GM12878 (cell line): ENCODE measurements at regions of chr7 and their contacts with region 1.

Region 1: GRCh38 chr7:42911454-42912447 is at the start of gene C7orf25:
- DNase-seq: peak; percentile 74
- ATAC-seq: peak; percentile 96
- H3K4me3 ChIP-seq: peak within 1 kb of the TSS; percentile 74
- H3K27ac ChIP-seq: peak within 1 kb of the TSS; percentile 72
- H3K4me1 ChIP-seq: peaks cover 15% of the 10 kb centered on the region
- H3K27me3 ChIP-seq: no peaks in the 10 kb centered on the region
- CTCF ChIP-seq: no peak
- EP300 ChIP-seq: no peak
- POLR2A ChIP-seq: peak; percentile 72
- RAD21 ChIP-seq: no peak
- polyA plus RNA-seq, gene C7orf25: 0.68 to 1.3 TPM

Region 2: GRCh38 chr7:42628074-42628473 is 283.7 kb before region 1 on chr7:
- CTCF ChIA-PET with region 1: no interaction called
- POLR2A ChIA-PET with region 1: no interaction called
- RAD21 ChIA-PET with region 1: no interaction called
- SMC1A ChIA-PET with region 1: no interaction called
- in situ Hi-C with region 1: no loop called
- intact Hi-C with region 1: no loop called
- DNase-seq: no peak
- ATAC-seq: no peak
- H3K4me3 ChIP-seq: no peak overlapping the region
- H3K27ac ChIP-seq: no peak overlapping the region
- H3K4me1 ChIP-seq: no peaks in the 10 kb centered on the region
- H3K27me3 ChIP-seq: no peaks in the 10 kb centered on the region
- CTCF ChIP-seq: no peak
- EP300 ChIP-seq: no peak
- POLR2A ChIP-seq: no peak
- RAD21 ChIP-seq: no peak

Region 3: GRCh38 chr7:42924223-42924838 is 12.6 kb after region 1 on chr7:
- CTCF ChIA-PET with region 1: interaction called, 9 read pairs
- POLR2A ChIA-PET with region 1: interaction called, 9 read pairs
- RAD21 ChIA-PET with region 1: interaction called, 3 read pairs
- SMC1A ChIA-PET with region 1: interaction called, 34 read pairs
- in situ Hi-C with region 1: no loop called
- intact Hi-C with region 1: no loop called
- DNase-seq: no peak
- ATAC-seq: peak; percentile 52
- H3K4me3 ChIP-seq: no peak overlapping the region
- H3K27ac ChIP-seq: peak overlapping the region; percentile 53
- H3K4me1 ChIP-seq: no peaks in the 10 kb centered on the region; the same call in 1 of the 2 replicates
- H3K27me3 ChIP-seq: no peaks in the 10 kb centered on the region
- CTCF ChIP-seq: no peak
- EP300 ChIP-seq: no peak
- POLR2A ChIP-seq: no peak
- RAD21 ChIP-seq: no peak

Region 4: DNA sequence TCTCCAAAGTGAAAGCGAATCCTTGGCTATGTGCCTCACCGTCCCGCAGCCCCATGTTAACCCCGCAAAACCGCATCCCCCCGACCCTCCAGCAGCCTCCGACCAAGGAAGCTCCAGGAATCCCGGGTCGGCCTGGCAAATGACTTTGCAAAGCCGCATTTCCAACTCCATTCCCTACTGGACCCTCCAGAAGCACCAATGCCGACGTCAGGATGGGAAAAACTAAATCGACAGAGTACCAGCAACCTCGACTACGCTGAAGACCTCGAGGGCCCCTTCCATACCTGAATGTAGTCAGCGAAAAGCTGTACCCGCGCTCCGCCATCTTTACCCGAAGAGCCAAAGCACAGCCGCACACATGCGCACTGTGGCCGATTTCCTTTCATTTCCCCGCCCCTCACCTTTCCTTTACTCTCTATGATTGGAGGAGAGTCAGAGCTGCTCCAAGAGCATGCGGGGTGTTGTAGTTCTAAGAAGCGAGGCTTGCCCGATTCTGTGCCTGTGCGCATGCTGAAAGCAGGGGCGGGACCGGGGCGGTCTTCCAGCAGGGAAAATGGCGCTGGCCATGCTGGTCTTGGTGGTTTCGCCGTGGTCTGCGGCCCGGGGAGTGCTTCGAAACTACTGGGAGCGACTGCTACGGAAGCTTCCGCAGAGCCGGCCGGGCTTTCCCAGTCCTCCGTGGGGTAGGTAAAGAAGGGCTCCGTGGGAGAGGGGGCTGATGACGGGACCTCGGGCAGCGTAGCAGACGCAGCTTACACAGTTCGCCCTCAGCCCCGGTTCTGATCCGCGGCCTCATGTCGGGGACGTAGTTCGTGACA is 20.3 kb after region 1 on chr7 and contains the starts of genes MRPL32 and PSMA2:
- CTCF ChIA-PET with region 1: interaction called, 6 read pairs
- POLR2A ChIA-PET with region 1: interaction called, 11 read pairs
- RAD21 ChIA-PET with region 1: interaction called, 7 read pairs
- SMC1A ChIA-PET with region 1: interaction called, 34 read pairs
- in situ Hi-C with region 1: no loop called
- intact Hi-C with region 1: loop called (anchors 2 kb)
- DNase-seq: peak; percentile 95
- ATAC-seq: peak; percentile 97
- H3K4me3 ChIP-seq: peak within 1 kb of the TSS; percentile 94
- H3K27ac ChIP-seq: peak within 1 kb of the TSS; percentile 86
- H3K4me1 ChIP-seq: peaks cover 15% of the 10 kb centered on the region; the same call in 1 of the 2 replicates
- H3K27me3 ChIP-seq: no peaks in the 10 kb centered on the region
- CTCF ChIP-seq: no peak
- EP300 ChIP-seq: no peak
- POLR2A ChIP-seq: peak; percentile 96
- RAD21 ChIP-seq: no peak
- polyA plus RNA-seq, gene MRPL32: 274 to 339 TPM
- polyA plus RNA-seq, gene PSMA2: 1,068 to 1,223 TPM